CD14-positive monocyte (primary cell): ENCODE measurements at regions of chr6 and their contacts with region 1.

Region 1: DNA sequence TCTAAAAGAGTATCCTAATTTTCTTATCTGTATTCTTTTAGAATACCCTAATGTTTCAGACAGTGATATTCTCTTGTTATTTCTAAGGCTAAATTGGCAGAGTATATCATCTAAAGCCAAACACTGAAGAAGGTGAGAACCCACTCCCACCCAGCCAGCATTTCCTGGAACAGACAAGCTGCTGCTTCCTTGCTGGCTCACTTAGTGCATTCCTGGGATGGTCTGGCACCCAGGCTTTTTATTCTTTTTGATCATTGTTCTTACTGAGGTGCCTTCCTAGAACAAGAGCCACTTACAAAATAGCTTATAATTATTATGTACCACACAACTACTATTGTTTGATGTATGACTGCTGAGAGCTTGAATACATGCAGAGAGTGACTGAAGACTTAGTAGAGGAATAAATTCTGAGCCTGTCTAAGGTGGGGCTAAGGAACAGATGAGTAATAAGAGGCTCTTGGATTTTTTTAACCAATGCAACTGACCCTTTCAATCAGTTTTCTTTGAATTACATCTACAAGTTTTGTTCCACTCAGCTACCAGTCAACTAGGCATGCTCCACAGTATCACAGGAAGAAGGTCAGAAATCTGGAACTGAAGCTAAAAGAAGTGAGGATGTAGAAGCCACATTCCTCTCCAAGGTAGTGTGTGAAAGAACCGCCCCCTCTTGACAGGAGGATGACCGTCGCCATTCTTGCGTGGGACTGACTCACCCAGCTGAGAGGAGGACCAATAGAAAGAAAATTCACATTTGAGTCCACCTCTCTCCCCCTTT is 30.1 kb downstream of the PRPH2 start:
- DNase-seq: no peak
- H3K4me3 ChIP-seq: no peak overlapping the region
- H3K4me3 Mint-ChIP-seq: no peak overlapping the region
- H3K27ac ChIP-seq: peak overlapping the region in 1 of 2 donors; percentile 38
- H3K27ac Mint-ChIP-seq: no peak overlapping the region
- H3K4me1 ChIP-seq: no peaks in the 10 kb centered on the region
- H3K4me1 Mint-ChIP-seq: no peaks in the 10 kb centered on the region
- H3K27me3 ChIP-seq: no peaks in the 10 kb centered on the region
- H3K27me3 Mint-ChIP-seq: no peaks in the 10 kb centered on the region
- CTCF ChIP-seq: no peak

Region 2: GRCh38 chr6:42387336-42387735 is 305.0 kb before region 1 on chr6:
- intact Hi-C with region 1: no loop called
- DNase-seq: no peak
- H3K4me3 ChIP-seq: no peak overlapping the region
- H3K4me3 Mint-ChIP-seq: peak overlapping the region in 1 of 2 donors; percentile 14
- H3K27ac ChIP-seq: peak overlapping the region in 1 of 2 donors; percentile 46
- H3K27ac Mint-ChIP-seq: peak overlapping the region in 3 of 7 donors; percentile 4 to 81 (median 64)
- H3K4me1 ChIP-seq: peaks cover 20 to 22% of the 10 kb centered on the region in 2 donors
- H3K4me1 Mint-ChIP-seq: peaks cover 50% of the 10 kb centered on the region
- H3K27me3 ChIP-seq: no peaks in the 10 kb centered on the region
- H3K27me3 Mint-ChIP-seq: no peaks in the 10 kb centered on the region
- CTCF ChIP-seq: no peak

Region 3: DNA sequence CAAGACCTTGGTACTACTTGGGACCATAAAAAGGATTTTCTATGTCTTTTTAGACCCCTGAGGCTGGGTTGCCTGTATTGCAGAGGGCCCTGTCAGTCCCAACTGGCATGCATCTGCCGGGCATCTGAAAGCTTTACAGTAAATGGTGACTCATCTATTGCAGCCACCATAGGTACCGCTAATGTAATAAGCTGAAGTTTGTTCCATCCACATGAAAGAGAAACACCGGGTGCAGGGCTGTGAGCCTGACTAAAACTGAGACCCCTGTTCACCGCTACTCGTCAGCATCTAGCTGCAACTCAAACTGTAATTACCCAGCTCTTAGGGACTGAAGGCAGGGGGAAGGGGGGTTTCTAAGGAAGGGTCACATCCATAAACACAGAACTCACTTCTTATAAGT is 290.1 kb before region 1 on chr6:
- intact Hi-C with region 1: no loop called
- DNase-seq: peak in 2 of 3 donors; percentile 63 to 65
- H3K4me3 ChIP-seq: no peak overlapping the region
- H3K4me3 Mint-ChIP-seq: no peak overlapping the region
- H3K27ac ChIP-seq: peak overlapping the region in 1 of 2 donors; percentile 51
- H3K27ac Mint-ChIP-seq: peak overlapping the region in 3 of 7 donors; percentile 15 to 82 (median 63)
- H3K4me1 ChIP-seq: peaks cover 44 to 55% of the 10 kb centered on the region in 2 donors
- H3K4me1 Mint-ChIP-seq: peaks cover 53% of the 10 kb centered on the region
- H3K27me3 ChIP-seq: no peaks in the 10 kb centered on the region
- H3K27me3 Mint-ChIP-seq: peaks cover 0 to 2% (median 0%) of the 10 kb centered on the region in 3 donors
- CTCF ChIP-seq: no peak

Region 4: DNA sequence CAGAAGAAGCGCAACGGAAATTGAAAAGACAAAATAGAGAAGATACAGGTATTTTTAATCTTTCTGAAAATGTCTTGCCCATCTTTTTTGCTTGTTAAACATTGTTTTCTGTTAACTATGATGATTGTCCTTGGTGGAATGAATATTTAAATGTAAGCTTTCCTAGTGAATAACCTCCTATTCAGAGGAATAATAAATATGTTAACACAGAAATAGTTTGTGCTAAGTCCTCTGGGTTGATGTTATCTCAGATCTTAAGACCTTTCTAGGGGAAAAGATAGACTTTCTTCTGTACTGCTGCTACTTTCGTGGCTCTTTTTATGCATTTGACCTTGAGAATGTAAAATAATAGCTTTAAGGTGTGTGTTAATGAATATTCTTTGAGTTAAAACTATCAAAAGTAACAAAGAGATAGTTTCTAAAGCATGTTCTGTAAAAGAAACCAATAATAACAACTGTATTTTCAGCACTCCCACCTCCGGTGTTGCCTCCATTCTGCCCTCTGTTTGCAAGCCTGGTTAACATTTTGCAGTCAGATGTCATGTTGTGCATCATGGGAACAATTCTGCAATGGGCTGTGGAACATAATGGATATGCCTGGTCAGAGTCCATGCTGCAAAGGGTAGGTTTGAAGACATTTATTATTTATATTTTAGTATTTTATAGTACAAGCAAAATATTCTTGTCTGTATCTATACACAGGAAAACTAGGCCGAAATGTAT is 40.1 kb before region 1 on chr6:
- intact Hi-C with region 1: loop called in 1 of 2 experiments (anchors 5 kb)
- DNase-seq: no peak
- H3K4me3 ChIP-seq: no peak overlapping the region
- H3K4me3 Mint-ChIP-seq: no peak overlapping the region
- H3K27ac ChIP-seq: no peak overlapping the region
- H3K27ac Mint-ChIP-seq: no peak overlapping the region
- H3K4me1 ChIP-seq: no peaks in the 10 kb centered on the region
- H3K4me1 Mint-ChIP-seq: no peaks in the 10 kb centered on the region
- H3K27me3 ChIP-seq: no peaks in the 10 kb centered on the region
- H3K27me3 Mint-ChIP-seq: no peaks in the 10 kb centered on the region
- CTCF ChIP-seq: no peak